Posterior cingulate gyrus (tissue), 11 donors: ENCODE measurements at regions of chr2 and their contacts with region 1.

Region 1: GRCh38 chr2:204691911-204692510 is 146.7 kb downstream of the PARD3B start:
- DNase-seq: peak in 1 of 10 donors; percentile 16

Region 2: DNA sequence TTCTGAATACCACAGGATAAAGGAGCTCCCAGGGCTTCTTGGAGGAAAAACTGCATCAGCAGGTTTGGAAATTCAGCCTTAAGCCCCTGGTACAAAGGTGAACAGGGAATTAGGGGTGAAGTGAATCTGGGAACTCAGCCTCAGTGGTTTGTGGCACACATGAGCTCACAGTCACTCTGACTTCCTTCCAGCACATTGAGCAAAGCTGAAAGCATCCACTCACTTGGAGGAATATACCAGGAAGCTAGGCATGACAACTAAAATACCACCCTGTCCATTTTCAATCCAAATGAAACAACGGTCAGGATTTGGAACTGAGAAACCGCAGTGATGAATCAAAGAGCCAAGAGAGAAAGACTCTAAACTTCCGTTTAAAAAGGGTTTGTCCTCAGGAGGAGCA is 539.4 kb before region 1 on chr2:
- intact Hi-C with region 1: loop called (anchors 5 kb)
- DNase-seq: no peak